AG04449 (cell line): ENCODE measurements at regions of chr1 and their contacts with region 1.

Region 1: DNA sequence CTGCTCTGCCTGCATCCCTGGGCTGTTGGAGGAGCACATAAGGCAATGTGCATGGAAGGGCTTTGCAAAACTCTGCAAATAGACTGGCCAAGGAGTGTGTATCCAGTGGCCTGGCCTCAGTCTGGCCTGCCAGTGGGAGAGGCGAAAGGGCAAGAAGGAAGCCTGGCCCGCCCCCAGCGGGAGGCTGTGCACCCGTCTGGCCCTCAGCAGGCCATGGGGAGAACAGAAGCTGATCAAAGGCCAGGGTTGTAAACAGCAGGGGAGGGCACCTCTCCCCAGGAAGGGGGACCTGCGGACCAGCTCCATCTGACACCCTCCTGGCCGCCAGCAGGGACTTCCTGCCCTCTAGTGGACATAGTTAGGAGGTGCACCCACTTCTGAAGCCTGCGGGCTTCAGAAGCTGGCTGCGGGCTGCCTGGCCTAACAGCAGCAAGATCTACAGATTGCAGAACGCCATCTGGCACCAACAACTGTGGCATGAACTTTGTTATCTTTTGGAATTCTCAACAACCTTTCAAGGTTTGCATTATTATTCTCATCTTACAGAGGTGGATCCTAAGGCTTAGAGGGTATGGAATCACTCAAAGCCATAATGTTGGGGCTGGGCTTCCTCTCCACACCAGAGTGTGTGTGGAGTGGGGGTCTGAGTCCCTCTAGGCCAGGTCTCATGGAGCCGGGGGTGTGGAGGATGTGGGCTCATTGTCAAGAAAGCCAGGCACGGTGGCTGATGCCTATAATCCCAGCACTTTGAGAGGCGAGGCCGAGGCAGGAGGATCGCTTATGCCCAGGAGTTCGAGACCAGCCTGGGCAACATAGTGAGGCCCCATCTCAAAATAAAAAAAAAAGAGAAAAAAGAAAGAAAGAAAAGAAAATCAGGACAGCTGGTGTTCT is 18.9 kb upstream of the CDK18 start:
- DNase-seq: no peak
- H3K4me3 ChIP-seq: no peak overlapping the region
- CTCF ChIP-seq: peak; percentile 89

Region 2: DNA sequence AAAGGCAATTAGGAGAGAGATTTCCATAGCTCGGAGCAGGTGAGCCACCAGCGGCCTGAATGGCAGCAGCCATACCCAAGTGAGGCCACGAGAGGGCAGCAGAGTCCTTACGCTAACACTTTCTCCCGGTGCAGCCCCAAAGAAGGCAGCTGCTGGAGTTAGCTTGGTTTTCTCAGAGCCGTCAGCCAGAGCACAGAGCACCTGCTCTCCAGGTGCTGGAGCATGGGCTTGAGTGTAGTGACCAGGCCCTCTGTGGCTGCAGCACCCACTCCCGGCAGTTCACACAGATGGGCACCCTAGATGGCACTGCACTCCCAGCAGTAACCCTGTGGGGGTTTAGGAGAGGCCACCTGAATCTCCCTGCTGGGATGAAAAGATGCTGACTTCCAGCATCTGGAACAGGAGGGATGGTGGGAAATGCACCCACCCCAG is 212.0 kb before region 1 on chr1:
- CTCF ChIA-PET with region 1: interaction called, 47 read pairs
- POLR2A ChIA-PET with region 1: no interaction called
- DNase-seq: no peak
- H3K4me3 ChIP-seq: no peak overlapping the region
- CTCF ChIP-seq: peak; percentile 96

Region 3: DNA sequence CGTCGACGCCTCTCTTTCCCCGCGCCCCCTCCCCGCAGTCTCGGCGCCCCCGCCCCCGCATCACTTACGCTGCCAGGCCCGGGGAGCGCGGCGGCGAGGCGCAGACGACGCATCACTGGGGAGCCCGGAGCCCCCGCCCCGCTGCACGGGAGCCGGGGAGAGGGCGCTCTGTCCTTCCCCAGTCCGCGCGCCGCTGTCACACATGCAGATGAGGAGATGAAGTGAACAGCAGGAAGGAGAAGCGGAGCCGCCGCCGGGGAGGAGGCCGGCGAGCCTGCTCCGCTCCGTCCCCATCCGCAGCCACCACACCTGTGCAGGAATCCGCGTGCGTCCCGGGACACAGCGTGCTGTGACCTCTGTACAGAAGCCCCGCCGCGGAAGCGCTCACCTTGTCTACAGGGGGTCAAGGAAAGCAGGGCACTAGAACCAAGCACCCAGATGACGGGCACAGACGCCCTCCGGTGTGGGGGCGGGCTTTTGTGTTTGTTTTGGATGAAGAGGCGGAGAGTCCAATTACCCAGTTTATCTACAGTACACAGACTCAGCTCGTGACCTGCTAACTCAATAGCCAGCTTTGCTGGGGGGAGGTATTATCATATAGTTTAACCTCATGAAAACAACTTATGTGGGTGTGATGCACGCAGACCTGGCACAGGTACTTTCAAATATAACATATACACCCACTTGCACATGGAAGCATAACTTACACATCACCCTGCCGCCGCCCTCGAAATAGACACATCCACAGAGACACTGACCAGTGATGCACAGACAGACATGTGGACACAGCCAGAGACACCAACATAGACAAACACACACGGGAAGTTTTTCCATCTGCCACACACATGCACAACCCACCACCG is 141.3 kb before region 1 on chr1:
- CTCF ChIA-PET with region 1: interaction called, 55 read pairs
- POLR2A ChIA-PET with region 1: no interaction called
- DNase-seq: no peak
- H3K4me3 ChIP-seq: peak overlapping the region; percentile 18; the same call in 1 of the 2 replicates
- CTCF ChIP-seq: no peak

Region 4: GRCh38 chr1:205375835-205376545 is 109.6 kb before region 1 on chr1:
- CTCF ChIA-PET with region 1: interaction called, 12 read pairs
- POLR2A ChIA-PET with region 1: no interaction called
- DNase-seq: no peak
- H3K4me3 ChIP-seq: no peak overlapping the region
- CTCF ChIP-seq: peak; percentile 9

Region 5: GRCh38 chr1:205416322-205416721 is 69.3 kb before region 1 on chr1:
- CTCF ChIA-PET with region 1: interaction called, 16 read pairs
- POLR2A ChIA-PET with region 1: no interaction called
- DNase-seq: no peak
- H3K4me3 ChIP-seq: no peak overlapping the region
- CTCF ChIP-seq: no peak

Region 6: DNA sequence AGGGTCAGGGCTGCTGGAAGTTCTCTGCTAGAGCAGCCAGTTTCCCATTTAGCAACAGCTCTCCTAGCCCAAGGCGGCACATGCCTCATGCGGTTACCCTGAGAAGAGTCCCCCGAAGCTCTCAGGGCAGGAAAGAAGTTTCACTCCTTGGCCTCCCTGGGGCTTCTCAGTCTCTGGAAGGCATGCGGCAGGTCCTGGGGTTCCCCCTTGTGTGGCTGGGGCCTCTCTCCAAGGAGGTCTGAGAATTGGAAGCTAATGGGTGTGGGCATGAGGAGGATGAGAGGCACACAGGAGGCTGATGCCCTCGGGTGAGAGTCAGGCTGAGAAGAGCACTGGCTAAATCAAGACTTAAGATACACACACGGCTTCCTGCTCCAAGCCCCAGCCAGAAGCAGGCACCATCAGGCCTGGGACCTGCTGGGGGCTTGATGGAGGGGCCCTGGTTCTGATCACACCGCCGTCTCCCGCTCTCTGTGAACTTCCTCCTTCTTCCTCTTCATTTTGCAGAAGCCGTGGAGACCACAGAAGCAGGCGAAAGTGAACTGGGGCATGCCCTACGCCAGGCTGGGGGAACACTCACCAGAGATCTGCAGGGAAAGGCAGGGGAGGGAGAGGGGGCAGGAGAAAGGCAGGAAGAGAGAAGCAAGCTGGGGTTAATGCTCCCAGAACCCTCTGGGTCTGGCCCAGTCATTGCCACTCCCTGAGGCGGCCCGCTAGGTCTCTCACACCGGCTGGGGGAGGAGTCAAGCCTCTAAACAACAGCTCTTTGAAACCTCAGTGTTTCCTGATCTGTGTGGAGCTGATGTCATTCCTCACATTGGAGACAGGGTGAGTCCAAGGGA is 44.9 kb before region 1 on chr1:
- CTCF ChIA-PET with region 1: interaction called, 34 read pairs
- POLR2A ChIA-PET with region 1: no interaction called
- DNase-seq: no peak
- H3K4me3 ChIP-seq: no peak overlapping the region
- CTCF ChIP-seq: no peak

Region 7: GRCh38 chr1:205465392-205465791 is 20.2 kb before region 1 on chr1:
- CTCF ChIA-PET with region 1: interaction called, 22 read pairs
- POLR2A ChIA-PET with region 1: no interaction called
- DNase-seq: no peak
- H3K4me3 ChIP-seq: no peak overlapping the region
- CTCF ChIP-seq: no peak